Right cardiac atrium (tissue), 5 donors: ENCODE measurements at regions of chr6 and their contacts with region 1.

Region 1: GRCh38 chr6:135451693-135452092 is 45.8 kb downstream of the AHI1 start:
- DNase-seq: no peak
- ATAC-seq: no peak
- H3K4me3 ChIP-seq: no peak overlapping the region
- H3K27ac ChIP-seq: no peak overlapping the region
- H3K4me1 ChIP-seq: no peaks in the 10 kb centered on the region
- H3K27me3 ChIP-seq: no peaks in the 10 kb centered on the region

Region 2: DNA sequence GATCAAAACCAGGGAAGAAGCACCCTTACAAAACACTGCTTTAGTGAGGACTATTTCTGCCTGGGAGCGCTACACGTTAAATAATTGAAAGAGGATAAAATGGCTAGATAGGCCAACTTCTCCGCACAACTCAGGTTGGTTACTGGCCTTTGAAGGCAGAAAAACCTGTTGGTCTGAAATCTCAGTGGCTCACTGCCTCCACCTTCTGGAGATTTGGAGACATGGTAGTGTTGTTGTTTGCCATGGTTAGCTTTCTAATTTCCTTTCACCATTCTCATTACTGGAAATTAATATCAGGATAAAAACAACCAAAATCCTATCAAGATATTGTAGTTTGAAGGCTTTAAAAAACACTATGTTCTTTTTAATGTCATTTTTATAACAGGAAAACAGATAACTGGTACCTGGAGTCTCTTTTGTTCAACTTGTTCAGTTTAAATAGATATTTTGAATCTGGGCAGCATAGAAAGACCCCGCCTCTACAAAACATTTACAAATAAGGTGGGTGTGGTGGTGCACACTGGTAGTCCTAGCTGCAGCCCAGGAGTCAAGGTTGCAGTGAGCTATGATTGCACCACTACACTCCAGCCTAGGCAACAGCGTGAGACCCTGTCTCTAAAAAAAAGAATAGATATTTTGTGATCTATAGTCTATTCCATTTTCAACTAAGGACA is 865.5 kb after region 1 on chr6:
- intact Hi-C with region 1: loop called in 1 of 4 experiments (anchors 5 kb)
- DNase-seq: peak in 1 of 3 donors; percentile 36
- ATAC-seq: peak; percentile 71 to 78
- H3K4me3 ChIP-seq: no peak overlapping the region
- H3K27ac ChIP-seq: no peak overlapping the region
- H3K4me1 ChIP-seq: no peaks in the 10 kb centered on the region
- H3K27me3 ChIP-seq: no peaks in the 10 kb centered on the region